MCF 10A (cell line): ENCODE measurements at regions of chr7 and their contacts with region 1.

Region 1: GRCh38 chr7:92245487-92246362 is at the starts of genes ANKIB1 and KRIT1:
- DNase-seq: peak; percentile 83
- H3K4me3 Mint-ChIP-seq: peak within 1 kb of the TSS; percentile 89
- H3K27ac Mint-ChIP-seq: peak within 1 kb of the TSS; percentile 98
- H3K4me1 Mint-ChIP-seq: peaks cover 29% of the 10 kb centered on the region
- H3K27me3 Mint-ChIP-seq: no peaks in the 10 kb centered on the region
- CTCF ChIP-seq: no peak
- total RNA-seq, gene ANKIB1: 33.0 and 40.1 TPM in 2 replicates
- total RNA-seq, gene KRIT1: 38.9 and 41.3 TPM in 2 replicates

Region 2: DNA sequence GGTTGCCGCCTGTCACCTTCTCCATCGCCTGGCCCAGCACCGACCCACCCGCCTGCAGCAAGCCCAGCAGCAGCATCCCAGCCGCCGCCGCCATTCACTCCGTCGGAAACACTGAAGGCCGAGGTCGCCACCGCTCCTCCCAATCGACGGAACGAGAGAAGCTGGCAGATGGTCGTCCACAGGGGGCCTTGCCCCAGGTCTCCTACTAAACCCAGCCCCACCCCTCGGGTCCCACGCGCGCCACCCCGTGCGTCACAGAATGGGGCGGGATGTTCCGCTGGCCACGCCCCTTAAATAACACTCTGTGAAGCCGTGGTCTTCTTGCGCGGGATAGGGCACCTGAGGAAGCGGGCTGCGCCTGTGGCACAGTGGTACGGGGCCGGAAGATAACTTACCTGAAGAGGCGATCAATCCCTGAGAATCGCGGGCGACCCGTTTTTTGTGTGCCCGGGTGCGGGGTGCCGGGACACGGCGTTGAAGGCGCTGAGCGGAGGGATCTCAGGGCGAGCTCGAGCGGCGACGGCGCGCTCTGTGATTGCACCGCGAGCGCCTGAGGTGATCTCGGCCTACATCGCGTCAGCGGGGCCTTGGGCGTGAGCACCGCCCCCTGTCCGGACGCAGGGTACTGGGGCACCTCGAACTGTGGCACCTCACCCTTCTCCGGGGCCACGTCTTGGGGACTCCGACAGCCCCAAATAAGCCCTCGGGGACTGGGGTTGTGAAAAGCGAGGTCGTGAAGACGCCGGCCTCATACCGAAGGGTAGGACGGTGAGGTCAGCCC is 111.3 kb before region 1 on chr7 and contains the start of gene CYP51A1:
- CTCF ChIA-PET with region 1: interaction called, 7 read pairs
- POLR2A ChIA-PET with region 1: interaction called, 53 read pairs
- intact Hi-C with region 1: loop called (anchors 5 kb)
- DNase-seq: peak; percentile 94
- H3K4me3 Mint-ChIP-seq: peak within 1 kb of the TSS; percentile 90
- H3K27ac Mint-ChIP-seq: peak within 1 kb of the TSS; percentile 98
- H3K4me1 Mint-ChIP-seq: peaks cover 27% of the 10 kb centered on the region
- H3K27me3 Mint-ChIP-seq: no peaks in the 10 kb centered on the region
- CTCF ChIP-seq: no peak
- total RNA-seq, gene CYP51A1: 124 and 148 TPM in 2 replicates

Region 3: DNA sequence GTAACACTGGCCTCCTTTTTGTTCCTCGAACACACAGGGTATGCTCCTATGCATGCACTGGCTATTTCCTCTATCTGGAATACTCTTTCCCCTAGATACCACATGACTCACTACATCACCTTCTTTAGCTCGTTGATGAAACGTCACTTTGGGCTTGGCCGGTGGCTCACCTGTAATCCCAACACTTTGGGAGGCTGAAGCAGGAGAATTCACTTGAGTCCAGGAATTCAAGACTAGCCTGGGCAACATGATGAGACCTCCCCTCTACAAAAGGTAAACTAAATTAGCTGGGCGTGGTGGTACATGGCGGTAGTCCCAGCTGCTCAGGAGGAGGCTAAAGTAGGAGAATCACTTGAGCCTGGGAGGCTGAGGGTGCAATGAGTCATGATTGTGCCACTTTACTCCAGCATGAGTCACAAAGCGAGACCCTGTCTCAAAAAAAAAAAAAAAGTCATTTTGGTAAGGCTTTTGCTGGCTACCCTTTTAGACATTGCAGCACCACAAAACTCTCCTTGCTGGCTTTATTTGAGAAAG is 14.6 kb after region 1 on chr7:
- CTCF ChIA-PET with region 1: interaction called, 6 read pairs
- POLR2A ChIA-PET with region 1: interaction called, 12 read pairs
- intact Hi-C with region 1: no loop called
- DNase-seq: peak; percentile 72
- H3K4me3 Mint-ChIP-seq: no peak overlapping the region
- H3K27ac Mint-ChIP-seq: no peak overlapping the region
- H3K4me1 Mint-ChIP-seq: peaks cover 19% of the 10 kb centered on the region
- H3K27me3 Mint-ChIP-seq: no peaks in the 10 kb centered on the region
- CTCF ChIP-seq: no peak

Region 4: DNA sequence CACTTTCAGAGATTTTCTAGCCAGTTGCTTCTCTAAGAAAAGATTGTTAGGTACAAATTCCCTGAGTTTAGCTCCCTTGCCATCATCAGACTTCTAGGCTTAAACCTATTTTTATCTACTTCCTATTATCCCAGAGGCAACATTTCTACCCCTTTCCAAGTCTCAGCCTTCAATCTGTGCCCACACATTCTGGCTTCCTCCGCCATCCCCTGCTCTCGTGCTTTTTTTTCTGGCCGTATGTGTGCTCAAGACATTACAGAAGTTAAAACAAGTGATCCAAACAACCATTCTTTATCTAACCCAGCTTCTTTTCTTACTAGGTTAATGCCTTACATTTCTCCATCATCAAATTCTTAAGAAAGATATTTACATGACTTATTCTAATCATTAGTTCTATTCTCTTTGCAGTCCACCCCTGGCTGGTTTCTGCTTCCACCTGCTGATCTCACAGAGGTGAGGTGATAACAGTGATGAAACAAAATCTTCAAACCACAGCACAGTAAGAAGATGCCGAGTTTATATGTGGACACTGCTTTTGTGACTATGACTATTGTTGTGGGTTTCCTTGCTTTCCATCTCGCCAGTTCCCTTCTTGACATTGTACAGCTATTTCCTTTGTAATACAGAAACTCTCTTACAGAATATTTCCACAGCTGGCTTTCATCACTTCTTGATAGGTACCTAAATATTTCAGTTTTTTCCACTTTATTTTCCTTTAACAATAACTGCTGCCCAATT is 608.9 kb after region 1 on chr7:
- CTCF ChIA-PET with region 1: no interaction called
- POLR2A ChIA-PET with region 1: no interaction called
- intact Hi-C with region 1: no loop called
- DNase-seq: no peak
- H3K4me3 Mint-ChIP-seq: no peak overlapping the region
- H3K27ac Mint-ChIP-seq: no peak overlapping the region
- H3K4me1 Mint-ChIP-seq: no peaks in the 10 kb centered on the region
- H3K27me3 Mint-ChIP-seq: no peaks in the 10 kb centered on the region
- CTCF ChIP-seq: no peak